Activated T-helper 1 cell treated with anti-CD3 and anti-CD28 coated beads, Interleukin-12 subunit alpha, Interleukin-12 subunit beta, Interleukin-2, Interleukin-4 antibody, amounts not matched to agents 30 ng/mL and 10 ng/mL and 1 ng/mL, durations not matched to agents 14 hours and 24 hours and 36 hours (primary cell): ENCODE measurements at regions of chr9 and their contacts with region 1.

Region 1: DNA sequence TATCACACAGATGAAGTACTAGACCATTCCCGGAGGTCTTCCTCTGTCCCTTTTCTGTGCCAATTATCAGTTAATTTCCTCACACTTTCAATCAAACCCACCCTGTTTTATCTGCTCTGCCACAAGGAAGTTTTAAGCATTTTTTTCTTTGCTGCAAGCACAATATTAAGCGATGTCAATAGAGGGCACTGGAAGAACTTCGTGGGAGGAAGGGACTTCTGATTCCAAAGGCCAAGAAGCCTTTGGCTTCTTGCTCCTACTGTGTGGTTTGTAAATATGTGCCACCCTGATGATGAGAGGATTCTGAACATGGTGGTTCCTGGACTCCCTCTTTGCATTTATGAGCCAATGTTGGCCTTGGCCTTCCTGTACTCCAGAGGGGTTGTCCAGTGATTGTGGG is 1712.5 kb upstream of the C9orf72 start:
- DNase-seq: no peak
- H3K4me3 Mint-ChIP-seq: no peak overlapping the region
- H3K27ac Mint-ChIP-seq: no peak overlapping the region
- H3K4me1 Mint-ChIP-seq: no peaks in the 10 kb centered on the region
- H3K27me3 Mint-ChIP-seq: no peaks in the 10 kb centered on the region

Region 2: GRCh38 chr9:29245351-29245750 is 40.5 kb before region 1 on chr9:
- intact Hi-C with region 1: no loop called
- DNase-seq: no peak
- H3K4me3 Mint-ChIP-seq: no peak overlapping the region
- H3K27ac Mint-ChIP-seq: no peak overlapping the region
- H3K4me1 Mint-ChIP-seq: no peaks in the 10 kb centered on the region
- H3K27me3 Mint-ChIP-seq: no peaks in the 10 kb centered on the region

Region 3: DNA sequence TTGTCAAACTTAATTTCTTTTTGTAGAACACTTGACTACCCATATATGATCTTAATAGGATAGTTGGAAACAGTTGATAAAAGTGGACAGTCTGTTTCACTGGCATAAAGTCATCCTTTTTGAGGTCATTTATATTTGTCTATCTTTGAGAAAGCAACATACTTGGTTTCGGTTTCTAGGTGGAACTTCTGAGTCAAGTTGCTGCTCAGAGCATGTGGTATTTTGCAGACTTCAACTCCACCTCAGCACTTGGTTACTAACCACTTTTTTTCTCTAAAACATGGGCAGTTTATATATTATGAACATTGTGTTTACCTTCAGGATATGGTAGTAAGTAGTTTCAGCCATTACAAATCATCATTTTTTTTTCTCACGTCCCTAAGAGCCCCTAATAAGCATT is 36.4 kb after region 1 on chr9:
- intact Hi-C with region 1: loop called (anchors 1 kb)
- DNase-seq: no peak
- H3K4me3 Mint-ChIP-seq: no peak overlapping the region
- H3K27ac Mint-ChIP-seq: no peak overlapping the region
- H3K4me1 Mint-ChIP-seq: no peaks in the 10 kb centered on the region
- H3K27me3 Mint-ChIP-seq: no peaks in the 10 kb centered on the region